Prostate gland (tissue), 2 donors: ENCODE measurements at regions of chr2 and their contacts with region 1.

Region 1: DNA sequence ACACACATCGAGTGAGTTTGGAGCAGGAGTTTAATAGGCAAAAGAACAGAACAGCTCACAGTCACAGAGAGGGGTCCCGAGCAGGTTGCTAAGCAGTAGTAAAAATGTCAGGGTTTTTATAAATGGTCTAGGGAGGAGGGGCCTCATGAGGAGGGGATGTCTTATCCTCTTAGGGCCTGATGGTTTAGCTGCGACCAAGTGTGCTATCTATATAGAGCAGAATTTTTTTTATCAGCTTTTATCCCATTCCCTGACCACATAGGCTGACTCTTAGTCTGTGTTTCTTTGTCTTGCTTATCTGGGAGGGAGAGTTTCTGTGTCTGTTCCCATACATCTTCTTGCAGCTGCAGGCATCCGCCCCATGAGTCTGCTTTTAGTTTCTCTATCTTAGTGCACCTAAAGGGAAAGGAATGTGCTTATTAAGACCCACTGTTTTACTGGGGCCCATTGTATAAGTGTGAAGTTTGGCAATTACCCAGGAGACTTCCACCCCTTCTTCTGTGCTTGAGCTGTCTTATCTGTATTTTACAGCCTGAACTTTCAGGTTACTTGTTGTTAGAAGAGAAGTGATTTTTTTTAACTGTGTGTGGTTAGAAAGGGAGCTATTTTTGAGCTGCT is 30.4 kb upstream of the GMCL1 start:
- DNase-seq: no peak
- H3K4me3 ChIP-seq: peak overlapping the region; percentile 22 to 29
- H3K27ac ChIP-seq: peak overlapping the region; percentile 60 to 78
- H3K4me1 ChIP-seq: no peaks in the 10 kb centered on the region
- H3K27me3 ChIP-seq: no peaks in the 10 kb centered on the region
- CTCF ChIP-seq: no peak
- POLR2A ChIP-seq: no peak

Region 2: GRCh38 chr2:69741619-69742466 is 57.2 kb before region 1 on chr2 and contains the start of gene ANXA4:
- intact Hi-C with region 1: loop called (anchors 5 kb)
- DNase-seq: peak; percentile 93
- H3K4me3 ChIP-seq: peak within 1 kb of the TSS; percentile 73 to 90
- H3K27ac ChIP-seq: peak within 1 kb of the TSS; percentile 94 to 98
- H3K4me1 ChIP-seq: peaks cover 6% of the 10 kb centered on the region
- H3K27me3 ChIP-seq: no peaks in the 10 kb centered on the region
- CTCF ChIP-seq: no peak
- POLR2A ChIP-seq: peak; percentile 95
- total RNA-seq, gene ANXA4: 37.7 to 40.1 TPM